Activated CD8-positive, alpha-beta T cell treated with anti-CD3 and anti-CD28 coated beads for 36 hours (primary cell): ENCODE measurements at regions of chr2 and their contacts with region 1.

Region 1: DNA sequence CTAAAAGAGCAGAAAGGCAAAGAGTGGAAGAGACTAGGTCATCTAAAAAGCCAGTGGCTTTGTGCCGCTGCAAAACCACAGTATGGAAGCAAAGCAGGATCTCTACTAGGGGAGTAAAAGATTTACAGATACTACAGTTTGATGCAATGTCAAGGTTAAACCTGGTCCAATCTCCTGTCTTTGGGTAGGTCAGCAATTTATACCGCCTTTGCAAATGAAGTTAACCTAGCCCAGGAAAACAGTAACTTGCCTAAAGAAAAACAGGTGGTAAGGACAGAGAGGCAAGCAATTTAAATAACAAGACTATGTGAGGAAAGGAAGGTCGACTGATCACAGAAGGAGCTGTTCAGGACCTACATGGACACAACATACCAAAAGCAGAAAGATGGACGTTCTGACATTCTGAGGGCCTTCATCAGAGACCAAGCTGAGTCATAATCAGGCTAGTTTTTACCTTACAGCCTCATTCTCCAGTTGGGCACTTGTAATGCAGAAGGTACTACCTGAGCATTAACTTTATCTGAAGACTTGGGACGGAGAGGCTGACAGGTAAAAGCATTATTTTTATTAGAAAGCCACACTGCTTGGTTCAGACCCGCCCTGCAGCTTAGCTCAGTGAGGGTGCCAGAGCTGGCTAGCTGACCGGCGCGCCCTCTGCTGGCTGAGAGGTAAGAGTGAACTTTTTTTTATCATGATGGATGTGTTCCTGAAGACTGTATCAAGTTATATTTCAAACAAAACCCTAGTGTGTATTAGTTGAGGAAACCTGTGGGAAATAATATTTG is 15.9 kb downstream of the CDKL4 start:
- DNase-seq: peak; percentile 91
- ATAC-seq: peak; percentile 82
- H3K4me3 Mint-ChIP-seq: peak overlapping the region; percentile 56
- H3K27ac Mint-ChIP-seq: peak overlapping the region; percentile 89
- H3K4me1 Mint-ChIP-seq: peaks cover 41% of the 10 kb centered on the region
- H3K27me3 Mint-ChIP-seq: no peaks in the 10 kb centered on the region
- CTCF ChIP-seq: peak; percentile 92

Region 2: DNA sequence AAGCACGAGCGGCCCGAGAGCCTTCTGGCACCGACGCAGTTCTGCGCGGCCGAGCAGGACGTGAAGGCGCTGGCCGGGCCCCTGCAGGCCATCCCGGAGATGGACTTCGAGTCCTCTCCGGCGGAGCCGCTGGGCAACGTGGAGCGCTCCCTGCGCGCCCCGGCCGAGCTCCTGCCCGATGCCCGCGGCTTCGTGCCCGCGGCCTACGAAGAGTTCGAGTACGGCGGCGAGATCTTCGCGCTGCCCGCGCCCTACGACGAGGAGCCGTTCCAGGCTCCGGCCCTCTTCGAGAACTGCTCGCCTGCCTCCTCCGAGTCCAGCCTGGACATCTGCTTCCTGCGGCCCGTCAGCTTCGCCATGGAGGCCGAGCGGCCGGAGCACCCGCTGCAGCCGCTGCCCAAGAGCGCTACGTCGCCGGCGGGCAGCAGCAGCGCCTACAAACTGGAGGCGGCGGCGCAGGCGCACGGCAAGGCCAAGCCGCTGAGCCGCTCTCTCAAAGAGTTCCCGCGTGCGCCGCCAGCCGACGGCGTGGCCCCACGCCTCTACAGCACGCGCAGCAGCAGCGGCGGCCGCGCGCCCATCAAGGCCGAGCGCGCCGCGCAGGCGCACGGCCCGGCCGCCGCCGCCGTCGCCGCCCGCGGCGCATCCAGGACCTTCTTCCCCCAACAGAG is 267.7 kb before region 1 on chr2:
- CTCF ChIA-PET with region 1: interaction called, 12 read pairs
- POLR2A ChIA-PET with region 1: no interaction called
- intact Hi-C with region 1: no loop called
- DNase-seq: peak; percentile 78
- ATAC-seq: peak; percentile 98
- H3K4me3 Mint-ChIP-seq: peak overlapping the region; percentile 53
- H3K27ac Mint-ChIP-seq: no peak overlapping the region
- H3K4me1 Mint-ChIP-seq: no peaks in the 10 kb centered on the region
- H3K27me3 Mint-ChIP-seq: peaks cover 22% of the 10 kb centered on the region
- CTCF ChIP-seq: no peak

Region 3: GRCh38 chr2:39080152-39080551 is 147.7 kb before region 1 on chr2:
- CTCF ChIA-PET with region 1: interaction called, 18 read pairs
- POLR2A ChIA-PET with region 1: no interaction called
- intact Hi-C with region 1: no loop called
- DNase-seq: no peak
- ATAC-seq: no peak
- H3K4me3 Mint-ChIP-seq: no peak overlapping the region
- H3K27ac Mint-ChIP-seq: no peak overlapping the region
- H3K4me1 Mint-ChIP-seq: peaks cover 29% of the 10 kb centered on the region
- H3K27me3 Mint-ChIP-seq: no peaks in the 10 kb centered on the region
- CTCF ChIP-seq: no peak

Region 4: DNA sequence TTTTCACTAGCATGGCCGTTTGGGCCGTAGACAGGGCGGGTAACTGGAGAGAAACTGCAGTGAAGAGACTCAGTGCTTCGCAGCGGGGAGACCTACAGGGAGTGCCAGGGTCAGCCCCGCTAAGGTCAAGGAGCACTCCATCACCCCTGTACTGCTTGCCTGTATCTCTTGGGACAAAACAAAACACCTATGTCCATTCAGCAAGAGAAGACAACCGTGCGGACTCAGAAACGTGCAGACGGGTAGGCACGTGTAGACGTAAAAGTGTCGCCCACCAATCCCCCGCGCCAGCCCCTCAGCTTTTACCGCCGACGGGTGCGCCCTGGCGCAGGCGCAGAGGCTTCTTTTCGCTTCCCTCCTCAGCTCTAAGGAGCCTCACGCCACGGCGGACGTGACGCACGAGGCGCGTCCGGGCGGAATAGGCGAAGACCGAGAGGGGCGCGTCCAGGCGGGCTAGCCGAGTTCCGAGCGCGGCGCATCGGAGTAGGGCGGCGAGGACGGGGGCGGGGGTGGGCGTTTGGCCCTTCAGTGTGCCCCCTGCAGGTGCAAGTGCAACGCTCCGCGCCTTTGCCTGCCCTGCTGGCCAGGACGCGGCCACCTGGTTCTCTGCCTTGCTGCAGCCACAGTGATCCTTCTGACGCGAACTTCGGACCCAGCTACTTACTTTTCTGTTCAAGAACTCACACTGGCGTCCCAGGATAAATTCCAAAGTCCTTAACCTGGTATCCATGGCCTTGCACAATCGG is 103.6 kb before region 1 on chr2:
- CTCF ChIA-PET with region 1: interaction called, 107 read pairs
- POLR2A ChIA-PET with region 1: interaction called, 19 read pairs
- intact Hi-C with region 1: loop called (anchors 1 kb)
- DNase-seq: peak; percentile 98
- ATAC-seq: peak; percentile 72
- H3K4me3 Mint-ChIP-seq: peak overlapping the region; percentile 91
- H3K27ac Mint-ChIP-seq: peak overlapping the region; percentile 94
- H3K4me1 Mint-ChIP-seq: peaks cover 45% of the 10 kb centered on the region
- H3K27me3 Mint-ChIP-seq: no peaks in the 10 kb centered on the region
- CTCF ChIP-seq: peak; percentile 59

Region 5: DNA sequence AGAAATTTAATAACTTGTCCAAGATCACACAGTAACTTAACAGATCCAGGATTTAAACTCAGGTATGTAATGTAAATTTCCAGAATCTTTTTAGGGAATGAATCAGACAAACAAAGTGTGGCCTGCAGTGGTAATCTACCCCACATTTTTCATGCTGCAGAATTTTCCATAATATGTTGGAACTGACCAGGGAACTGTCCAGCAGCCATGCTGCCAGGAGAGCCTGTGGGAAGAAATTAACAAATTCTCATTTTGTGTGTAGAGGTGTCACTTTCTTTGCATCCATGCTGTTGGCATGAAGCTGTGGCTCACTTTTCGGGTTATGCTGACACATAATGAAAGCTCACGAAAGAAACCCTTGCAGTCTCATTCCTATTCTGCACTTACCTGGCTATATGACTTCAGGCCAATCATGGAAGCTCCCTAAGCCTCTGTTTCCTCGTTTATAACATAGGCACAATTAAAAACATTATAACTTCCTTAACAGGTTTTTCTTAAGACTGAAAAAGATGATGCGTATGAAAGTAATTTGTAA is 38.8 kb before region 1 on chr2:
- CTCF ChIA-PET with region 1: interaction called, 15 read pairs
- POLR2A ChIA-PET with region 1: interaction called, 3 read pairs
- intact Hi-C with region 1: no loop called
- DNase-seq: no peak
- ATAC-seq: no peak
- H3K4me3 Mint-ChIP-seq: no peak overlapping the region
- H3K27ac Mint-ChIP-seq: no peak overlapping the region
- H3K4me1 Mint-ChIP-seq: peaks cover 4% of the 10 kb centered on the region
- H3K27me3 Mint-ChIP-seq: no peaks in the 10 kb centered on the region
- CTCF ChIP-seq: no peak

Region 6: DNA sequence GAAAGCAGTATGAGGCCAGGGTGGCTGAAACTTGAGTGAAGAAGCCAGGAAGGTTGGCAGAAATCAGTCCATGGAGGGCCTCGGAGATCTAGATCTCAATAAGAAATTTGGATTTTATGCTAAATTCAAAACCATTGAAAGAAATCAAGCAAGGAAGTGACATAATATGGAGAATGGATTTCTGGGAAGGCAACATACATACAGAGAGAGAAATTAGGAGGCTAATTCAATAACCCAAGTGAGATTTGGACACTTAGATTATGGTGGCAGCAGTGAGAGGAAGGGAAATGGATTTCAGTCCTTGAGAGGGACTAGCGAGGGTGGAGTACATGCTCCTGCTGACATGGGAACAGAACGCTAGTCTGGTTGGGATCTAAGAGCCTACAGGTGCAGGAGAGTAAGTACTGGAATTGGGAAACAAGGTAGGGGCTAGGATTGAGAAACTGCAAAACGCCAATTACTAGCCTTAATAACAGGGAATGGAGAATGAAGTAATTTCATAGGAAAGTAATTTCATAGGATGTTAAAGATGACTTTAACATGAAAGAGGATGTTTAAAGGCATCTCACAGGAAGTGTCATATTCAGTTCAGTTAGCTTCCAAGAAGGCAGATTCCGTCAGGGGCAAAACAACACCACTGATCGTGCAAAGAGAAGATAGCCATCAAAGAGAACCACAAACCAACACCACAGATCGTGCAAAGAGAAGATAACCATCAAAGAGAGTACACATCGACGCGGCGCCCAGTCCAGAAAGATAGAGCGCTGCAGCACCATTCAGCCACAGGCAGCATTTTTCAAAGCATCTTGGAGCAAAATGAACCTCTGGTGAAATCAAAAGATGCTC is 11.3 kb before region 1 on chr2:
- CTCF ChIA-PET with region 1: interaction called, 26 read pairs
- POLR2A ChIA-PET with region 1: interaction called, 8 read pairs
- intact Hi-C with region 1: no loop called
- DNase-seq: peak; percentile 89
- ATAC-seq: peak; percentile 73
- H3K4me3 Mint-ChIP-seq: peak overlapping the region; percentile 47
- H3K27ac Mint-ChIP-seq: peak overlapping the region; percentile 94
- H3K4me1 Mint-ChIP-seq: peaks cover 63% of the 10 kb centered on the region
- H3K27me3 Mint-ChIP-seq: no peaks in the 10 kb centered on the region
- CTCF ChIP-seq: no peak